Psoas muscle (tissue), 8 donors: ENCODE measurements at regions of chr7 and their contacts with region 1.

Region 1: GRCh38 chr7:94436018-94436604 is 41.4 kb downstream of the COL1A2 start:
- DNase-seq: peak in 1 of 2 donors; percentile 29
- ATAC-seq: peak in 3 of 4 donors; percentile 61 to 83 (median 70)
- H3K4me3 ChIP-seq: no peak overlapping the region
- H3K27ac ChIP-seq: no peak overlapping the region
- H3K4me1 ChIP-seq: no peaks in the 10 kb centered on the region
- H3K27me3 ChIP-seq: no peaks in the 10 kb centered on the region
- CTCF ChIP-seq: peak; percentile 69

Region 2: DNA sequence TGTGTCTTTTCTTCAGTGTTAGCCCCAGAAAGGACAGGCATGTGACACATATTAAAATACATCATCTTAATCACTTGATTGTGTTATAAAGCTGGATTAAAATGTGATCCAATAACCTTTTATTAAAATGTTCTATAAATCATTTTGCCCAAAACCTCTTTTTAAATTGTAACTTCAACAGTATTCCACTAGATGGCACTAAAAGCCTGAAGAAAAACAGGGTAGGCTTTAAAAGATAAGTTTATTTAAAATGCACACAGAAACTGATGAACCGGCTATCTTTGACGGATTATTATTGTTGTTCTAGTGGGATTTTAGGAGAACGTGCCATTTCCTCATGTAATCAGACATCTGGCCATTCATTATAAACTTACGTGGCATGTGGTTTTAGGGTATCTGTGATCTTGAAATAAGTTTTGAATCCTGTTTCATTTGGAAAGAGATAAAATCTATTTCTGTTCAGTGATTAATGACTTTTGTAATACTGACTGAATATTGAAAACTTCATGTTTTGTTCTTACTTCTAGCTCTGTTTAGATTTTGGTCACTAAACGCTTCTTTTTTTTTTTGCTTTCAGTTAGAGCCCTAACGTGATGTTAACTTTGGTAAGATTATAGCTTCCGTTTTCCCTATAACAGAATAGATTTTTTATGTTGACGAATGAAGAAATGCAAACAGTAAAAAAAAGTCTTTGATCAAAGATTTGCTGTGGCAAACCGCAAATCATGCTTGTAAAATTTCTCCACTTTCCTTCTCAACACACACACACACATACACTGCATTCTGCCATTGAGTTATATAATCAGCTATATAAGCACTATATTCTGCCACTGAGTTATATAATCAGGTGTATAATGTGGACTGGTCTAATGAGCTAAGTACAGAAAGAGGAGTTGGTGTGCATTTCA is 1190.3 kb before region 1 on chr7:
- intact Hi-C with region 1: loop called in 1 of 2 experiments (anchors 10 kb)
- DNase-seq: no peak
- ATAC-seq: peak in 2 of 4 donors; percentile 30 to 40
- H3K4me3 ChIP-seq: no peak overlapping the region
- H3K27ac ChIP-seq: no peak overlapping the region
- H3K4me1 ChIP-seq: no peaks in the 10 kb centered on the region
- H3K27me3 ChIP-seq: no peaks in the 10 kb centered on the region
- CTCF ChIP-seq: peak; percentile 61

Region 3: DNA sequence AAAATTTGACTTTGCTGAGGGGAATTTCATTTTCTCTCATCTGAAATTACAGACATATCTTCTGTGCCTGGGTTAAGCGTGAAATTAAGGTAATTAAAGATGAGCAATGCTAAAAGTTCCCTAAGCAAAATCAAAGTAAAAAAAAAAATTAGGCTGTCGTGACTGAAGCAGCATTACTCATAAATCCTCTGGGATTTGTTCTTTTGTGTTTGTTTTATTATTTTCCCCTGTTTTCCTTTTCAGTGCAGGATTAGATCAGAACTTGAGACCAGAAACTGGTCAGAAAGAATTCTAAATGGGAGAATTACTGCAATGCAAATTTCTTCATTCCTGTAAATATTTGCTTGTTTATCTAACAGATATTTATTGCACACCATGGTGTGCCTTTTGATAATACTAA is 290.5 kb before region 1 on chr7:
- intact Hi-C with region 1: no loop called
- DNase-seq: no peak
- ATAC-seq: no peak
- H3K4me3 ChIP-seq: no peak overlapping the region
- H3K27ac ChIP-seq: no peak overlapping the region
- H3K4me1 ChIP-seq: no peaks in the 10 kb centered on the region
- H3K27me3 ChIP-seq: no peaks in the 10 kb centered on the region
- CTCF ChIP-seq: no peak

Region 4: DNA sequence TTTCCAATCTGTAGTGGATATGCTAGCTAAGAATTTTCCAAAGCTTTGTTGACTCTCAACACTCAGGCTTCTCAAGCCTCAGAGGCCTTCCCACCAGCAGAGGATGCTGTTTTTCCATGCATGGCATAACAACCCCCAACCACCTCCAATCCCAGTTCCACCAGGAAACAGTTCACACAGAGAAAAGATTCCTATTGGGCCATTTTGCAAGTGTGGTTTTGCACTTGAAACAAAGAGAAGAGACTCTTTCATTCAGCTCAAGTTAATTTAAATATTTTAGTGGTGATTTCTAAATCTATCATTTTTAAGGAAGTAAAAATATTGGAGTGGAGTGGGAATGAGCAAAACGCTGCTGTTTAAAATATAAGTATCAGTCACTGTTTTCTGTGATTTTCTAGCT is 147.0 kb before region 1 on chr7:
- intact Hi-C with region 1: loop called in 1 of 2 experiments (anchors 10 kb)
- DNase-seq: peak; percentile 25 to 53
- ATAC-seq: peak in 2 of 4 donors; percentile 48 to 74
- H3K4me3 ChIP-seq: no peak overlapping the region
- H3K27ac ChIP-seq: no peak overlapping the region
- H3K4me1 ChIP-seq: no peaks in the 10 kb centered on the region
- H3K27me3 ChIP-seq: no peaks in the 10 kb centered on the region
- CTCF ChIP-seq: peak; percentile 65